ENCODE measurements at regions of chr3 and their contacts with region 1.

Region 1: GRCh38 chr3:129245650-129246186 is 3.7 kb upstream of the COPG1 start:
- DNase-seq: peak; percentile 83
- H3K27ac ChIP-seq: peak overlapping the region; percentile 49
- CTCF ChIP-seq: peak; percentile 93

Region 2: DNA sequence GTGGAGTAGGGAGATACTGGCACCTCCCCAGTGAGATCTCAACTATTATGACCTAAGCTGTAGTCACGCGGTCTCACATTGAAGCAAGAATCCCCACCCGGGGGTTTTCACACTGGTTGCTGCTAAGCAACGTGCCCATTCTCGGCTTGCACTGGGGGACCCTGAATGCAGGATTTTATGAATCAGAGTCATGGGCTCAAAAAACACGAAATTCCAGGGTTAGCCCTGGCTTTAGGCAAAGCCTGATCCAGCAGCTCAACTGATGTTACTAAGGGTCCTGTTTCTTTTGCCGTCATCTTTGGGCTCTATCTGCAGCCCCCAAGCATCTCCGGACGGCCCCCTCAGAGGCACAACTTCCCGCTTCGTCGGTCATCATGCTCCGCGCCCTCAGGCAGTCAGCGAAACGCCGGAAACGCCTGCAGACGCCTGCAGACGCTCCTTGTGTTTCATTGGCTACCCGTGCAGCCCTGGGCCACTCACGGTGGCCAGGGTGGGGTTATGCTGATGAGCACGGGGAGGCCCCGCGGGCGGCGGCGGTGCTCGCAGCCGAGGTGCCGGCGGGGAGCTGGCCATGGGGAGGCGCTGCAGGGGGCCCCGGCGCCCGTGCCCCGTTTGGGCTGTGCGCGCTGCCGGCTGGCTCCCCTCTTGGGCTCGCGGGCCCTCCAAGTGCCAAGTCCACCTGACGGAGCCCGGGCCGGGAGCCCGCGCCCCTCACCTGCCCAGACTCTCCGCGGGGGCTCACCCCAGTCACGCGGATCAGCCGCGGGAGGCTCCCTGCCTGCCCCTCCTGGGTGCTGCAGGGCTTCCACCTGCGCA is 218.8 kb before region 1 on chr3:
- CTCF ChIA-PET with region 1: no interaction called
- POLR2A ChIA-PET with region 1: no interaction called
- DNase-seq: peak; percentile 94
- H3K27ac ChIP-seq: no peak overlapping the region
- CTCF ChIP-seq: peak; percentile 83

Region 3: GRCh38 chr3:129160891-129161859 is 84.5 kb before region 1 on chr3 and contains the start of gene ISY1:
- CTCF ChIA-PET with region 1: interaction called, 18 read pairs
- POLR2A ChIA-PET with region 1: interaction called, 7 read pairs
- DNase-seq: peak; percentile 97
- H3K27ac ChIP-seq: peak within 1 kb of the TSS; percentile 97
- CTCF ChIP-seq: peak; percentile 89

Region 4: DNA sequence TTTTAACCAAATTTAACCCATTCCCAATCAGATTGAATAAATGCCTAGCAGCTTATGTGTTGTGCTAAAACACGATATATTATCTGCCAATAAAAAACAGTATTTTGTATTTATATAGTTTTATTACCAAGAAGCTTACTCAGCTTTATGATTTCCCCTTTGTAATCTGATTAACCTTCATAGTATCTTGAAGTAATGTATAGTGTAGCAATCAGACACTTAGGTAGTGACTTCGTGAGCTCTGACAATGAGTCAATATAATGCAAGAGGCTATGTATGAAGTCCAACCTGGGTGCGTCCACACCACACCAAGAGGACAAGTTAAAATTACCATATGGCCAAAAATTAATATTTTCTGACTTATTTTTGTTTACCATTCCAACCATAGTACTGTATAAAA is 59.9 kb before region 1 on chr3:
- CTCF ChIA-PET with region 1: interaction called, 10 read pairs
- POLR2A ChIA-PET with region 1: interaction called, 3 read pairs
- DNase-seq: no peak
- H3K27ac ChIP-seq: peak overlapping the region; percentile 62
- CTCF ChIP-seq: no peak

Region 5: GRCh38 chr3:129352045-129352444 is 106.3 kb after region 1 on chr3:
- CTCF ChIA-PET with region 1: no interaction called
- POLR2A ChIA-PET with region 1: no interaction called
- DNase-seq: no peak
- H3K27ac ChIP-seq: no peak overlapping the region
- CTCF ChIP-seq: no peak